Body of pancreas (tissue), 4 donors: ENCODE measurements at regions of chr5 and their contacts with region 1.

Region 1: GRCh38 chr5:42950440-42951292 is 89.5 kb downstream of the ANXA2R start:
- DNase-seq: peak; percentile 62 to 81 (median 74)
- ATAC-seq: peak; percentile 88
- H3K4me3 ChIP-seq: peak overlapping the region in 1 of 2 donors; percentile 23
- H3K27ac ChIP-seq: peak overlapping the region in 3 of 4 donors; percentile 50 to 70 (median 66)
- H3K4me1 ChIP-seq: peaks cover 24% of the 10 kb centered on the region
- H3K27me3 ChIP-seq: peaks cover 6 to 55% of the 10 kb centered on the region in 2 donors
- CTCF ChIP-seq: no peak
- POLR2A ChIP-seq: peak in 2 of 3 donors; percentile 20 to 41

Region 2: DNA sequence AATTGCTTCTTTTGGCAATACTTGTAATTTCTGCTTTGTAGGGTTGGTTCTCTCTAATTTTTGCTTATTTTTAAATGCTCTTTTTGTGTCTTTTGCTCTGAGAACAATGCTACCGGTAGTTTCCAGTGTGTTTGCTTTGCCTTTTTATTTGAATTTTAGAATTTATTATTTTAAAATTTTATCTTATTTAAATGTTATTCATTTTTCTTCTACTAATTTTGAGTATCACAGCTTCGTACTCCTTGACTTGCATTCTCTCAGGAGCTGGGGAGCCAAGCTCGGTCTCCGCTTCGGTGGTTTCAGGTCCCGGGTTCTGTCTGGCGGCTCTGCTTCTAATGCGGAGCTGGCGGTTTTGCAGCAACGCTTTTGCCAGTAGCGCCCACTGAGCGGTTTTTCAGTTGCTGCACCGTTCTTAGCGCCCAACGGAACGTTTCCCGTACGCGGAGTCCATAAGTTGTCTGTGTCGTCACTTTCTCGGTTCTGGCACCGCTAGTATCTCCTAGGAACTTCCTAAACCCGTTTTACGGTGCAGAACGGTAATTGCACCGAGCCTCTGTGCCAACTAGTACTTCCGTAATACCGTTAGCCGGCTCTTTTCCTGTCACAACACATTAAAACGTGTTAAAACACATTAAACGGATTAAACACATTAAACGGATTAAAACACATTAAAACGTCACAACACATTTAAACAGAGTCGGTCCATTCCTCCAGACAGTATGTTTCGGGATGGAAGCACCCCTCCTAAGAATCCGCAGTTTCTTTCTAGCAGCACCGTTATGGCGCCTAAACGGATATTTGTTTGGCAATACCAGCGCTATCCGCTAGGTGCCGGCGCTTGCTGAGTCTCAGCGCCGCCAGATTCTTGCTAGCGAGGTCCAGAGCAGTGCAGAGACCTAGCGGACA is 43.8 kb after region 1 on chr5:
- intact Hi-C with region 1: loop called (anchors 10 kb)
- DNase-seq: peak; percentile 67 to 80 (median 71)
- ATAC-seq: peak; percentile 71
- H3K4me3 ChIP-seq: no peak overlapping the region
- H3K27ac ChIP-seq: peak overlapping the region in 2 of 4 donors; percentile 49 to 87
- H3K4me1 ChIP-seq: peaks cover 15% of the 10 kb centered on the region
- H3K27me3 ChIP-seq: peaks cover 5 to 55% of the 10 kb centered on the region in 2 donors
- CTCF ChIP-seq: peak; percentile 11 to 71 (median 67)
- POLR2A ChIP-seq: peak in 1 of 3 donors; percentile 30

Region 3: DNA sequence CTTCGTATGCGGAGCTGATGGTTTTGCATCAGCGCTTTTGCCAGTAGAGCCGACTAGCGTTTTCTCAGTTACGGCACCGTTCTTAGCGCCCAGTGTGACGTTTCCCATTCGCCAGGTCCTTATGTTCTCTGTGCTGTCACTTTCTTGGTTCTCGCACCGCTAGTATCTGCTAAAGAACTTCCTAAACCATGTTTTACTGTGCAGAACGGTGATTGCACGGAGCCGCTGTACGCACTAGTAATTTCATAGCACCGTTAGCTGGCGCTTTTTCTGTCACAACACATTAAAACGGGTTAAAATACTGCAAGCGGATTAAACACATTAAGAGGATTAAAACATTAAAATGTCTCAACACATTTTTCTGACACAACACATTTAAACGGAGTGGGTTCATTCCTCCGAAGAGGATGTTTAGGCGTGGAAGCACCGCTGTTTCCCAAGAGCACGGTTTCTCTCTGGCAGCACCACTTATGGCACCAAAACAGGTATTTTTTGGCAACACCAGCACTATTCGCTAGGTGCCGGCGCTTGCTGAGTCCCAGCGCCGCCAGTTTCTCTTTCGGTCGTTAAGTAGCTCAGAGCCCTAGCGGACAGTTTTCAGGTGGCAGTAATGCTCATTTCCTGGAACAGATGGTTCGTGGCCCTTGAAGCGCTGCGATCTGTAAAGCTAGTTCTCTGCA is 69.1 kb after region 1 on chr5:
- intact Hi-C with region 1: loop called (anchors 10 kb)
- DNase-seq: peak; percentile 62 to 81 (median 70)
- ATAC-seq: peak; percentile 70
- H3K4me3 ChIP-seq: peak overlapping the region in 1 of 2 donors; percentile 1
- H3K27ac ChIP-seq: peak overlapping the region in 3 of 4 donors; percentile 4 to 87 (median 34)
- H3K4me1 ChIP-seq: peaks cover 4% of the 10 kb centered on the region
- H3K27me3 ChIP-seq: peaks cover 0 to 36% of the 10 kb centered on the region in 2 donors
- CTCF ChIP-seq: peak in 6 of 7 experiments; percentile 14 to 48 (median 40)
- POLR2A ChIP-seq: no peak